ENCODE measurements at regions of chr1 and their contacts with region 1.

Region 1: GRCh38 chr1:52927212-52928014 is at the start of gene SCP2:
- DNase-seq: no peak
- ATAC-seq: peak; percentile 93
- H3K4me3 ChIP-seq: peak within 1 kb of the TSS; percentile 66 to 83
- H3K27ac ChIP-seq: peak within 1 kb of the TSS; percentile 90
- H3K4me1 ChIP-seq: peaks cover 11% of the 10 kb centered on the region
- H3K27me3 ChIP-seq: no peaks in the 10 kb centered on the region
- CTCF ChIP-seq: no peak
- total RNA-seq, gene SCP2: 88.7 TPM

Region 2: GRCh38 chr1:52798331-52798730 is 129.1 kb before region 1 on chr1:
- CTCF ChIA-PET with region 1: interaction called, 14 read pairs
- POLR2A ChIA-PET with region 1: no interaction called
- in situ Hi-C with region 1: no loop called
- intact Hi-C with region 1: no loop called
- DNase-seq: no peak
- ATAC-seq: no peak
- H3K4me3 ChIP-seq: no peak overlapping the region
- H3K27ac ChIP-seq: no peak overlapping the region
- H3K4me1 ChIP-seq: no peaks in the 10 kb centered on the region
- H3K27me3 ChIP-seq: no peaks in the 10 kb centered on the region
- CTCF ChIP-seq: no peak

Region 3: GRCh38 chr1:52899445-52899894 is 27.9 kb before region 1 on chr1:
- CTCF ChIA-PET with region 1: no interaction called
- POLR2A ChIA-PET with region 1: no interaction called
- in situ Hi-C with region 1: no loop called
- intact Hi-C with region 1: no loop called
- DNase-seq: no peak
- ATAC-seq: no peak
- H3K4me3 ChIP-seq: no peak overlapping the region
- H3K27ac ChIP-seq: no peak overlapping the region
- H3K4me1 ChIP-seq: no peaks in the 10 kb centered on the region
- H3K27me3 ChIP-seq: no peaks in the 10 kb centered on the region
- CTCF ChIP-seq: no peak

Region 4: GRCh38 chr1:53104289-53104913 is 177.0 kb after region 1 on chr1:
- CTCF ChIA-PET with region 1: no interaction called
- POLR2A ChIA-PET with region 1: no interaction called
- in situ Hi-C with region 1: no loop called
- intact Hi-C with region 1: no loop called
- DNase-seq: no peak
- ATAC-seq: no peak
- H3K4me3 ChIP-seq: no peak overlapping the region
- H3K27ac ChIP-seq: no peak overlapping the region; the same call in 1 of the 2 replicates
- H3K4me1 ChIP-seq: peaks cover 23% of the 10 kb centered on the region
- H3K27me3 ChIP-seq: no peaks in the 10 kb centered on the region
- CTCF ChIP-seq: no peak

Region 5: DNA sequence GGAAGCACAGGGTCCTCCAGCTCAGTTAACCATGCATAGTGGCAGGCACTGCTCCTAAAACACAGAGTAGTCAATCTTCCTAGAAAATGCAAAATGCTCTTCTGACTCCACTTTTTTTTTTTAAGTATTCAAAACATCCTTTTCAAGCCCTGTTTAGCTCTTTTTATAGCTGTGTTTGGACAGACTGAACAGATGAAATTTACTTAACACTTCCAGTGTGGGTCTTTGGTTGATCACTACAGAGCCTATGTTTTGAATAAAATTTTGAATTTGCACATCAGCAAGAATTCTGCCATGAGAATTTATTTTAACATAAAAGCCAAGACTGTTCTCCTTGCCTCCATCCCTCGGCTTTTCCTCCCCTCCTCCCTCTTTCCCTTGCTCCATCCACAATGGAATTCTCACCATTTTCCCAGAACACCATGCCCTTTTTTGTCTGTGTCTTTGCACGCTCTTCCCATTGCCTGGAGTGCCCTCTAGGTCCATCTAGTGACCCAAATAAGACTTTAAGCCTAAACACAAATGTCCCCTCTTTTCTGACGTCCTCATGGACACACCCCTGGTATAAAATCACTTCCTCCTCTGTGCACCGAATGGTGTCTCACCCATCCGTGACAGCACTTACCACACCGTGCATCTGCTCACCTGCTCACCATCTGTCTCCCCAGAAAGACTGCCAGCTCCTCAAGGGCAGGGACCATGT is 245.2 kb after region 1 on chr1:
- CTCF ChIA-PET with region 1: no interaction called
- POLR2A ChIA-PET with region 1: no interaction called
- in situ Hi-C with region 1: no loop called
- intact Hi-C with region 1: loop called (anchors 10 kb)
- DNase-seq: no peak
- ATAC-seq: 0 out of 2 replicates have a peak, but pooled peaks have one; percentile 20
- H3K4me3 ChIP-seq: no peak overlapping the region
- H3K27ac ChIP-seq: no peak overlapping the region
- H3K4me1 ChIP-seq: peaks cover 15% of the 10 kb centered on the region
- H3K27me3 ChIP-seq: no peaks in the 10 kb centered on the region
- CTCF ChIP-seq: peak; percentile 61

Measured in Panc1 (cell line).